SK-N-SH (cell line): ENCODE measurements at regions of chr1 and their contacts with region 1.

Region 1: DNA sequence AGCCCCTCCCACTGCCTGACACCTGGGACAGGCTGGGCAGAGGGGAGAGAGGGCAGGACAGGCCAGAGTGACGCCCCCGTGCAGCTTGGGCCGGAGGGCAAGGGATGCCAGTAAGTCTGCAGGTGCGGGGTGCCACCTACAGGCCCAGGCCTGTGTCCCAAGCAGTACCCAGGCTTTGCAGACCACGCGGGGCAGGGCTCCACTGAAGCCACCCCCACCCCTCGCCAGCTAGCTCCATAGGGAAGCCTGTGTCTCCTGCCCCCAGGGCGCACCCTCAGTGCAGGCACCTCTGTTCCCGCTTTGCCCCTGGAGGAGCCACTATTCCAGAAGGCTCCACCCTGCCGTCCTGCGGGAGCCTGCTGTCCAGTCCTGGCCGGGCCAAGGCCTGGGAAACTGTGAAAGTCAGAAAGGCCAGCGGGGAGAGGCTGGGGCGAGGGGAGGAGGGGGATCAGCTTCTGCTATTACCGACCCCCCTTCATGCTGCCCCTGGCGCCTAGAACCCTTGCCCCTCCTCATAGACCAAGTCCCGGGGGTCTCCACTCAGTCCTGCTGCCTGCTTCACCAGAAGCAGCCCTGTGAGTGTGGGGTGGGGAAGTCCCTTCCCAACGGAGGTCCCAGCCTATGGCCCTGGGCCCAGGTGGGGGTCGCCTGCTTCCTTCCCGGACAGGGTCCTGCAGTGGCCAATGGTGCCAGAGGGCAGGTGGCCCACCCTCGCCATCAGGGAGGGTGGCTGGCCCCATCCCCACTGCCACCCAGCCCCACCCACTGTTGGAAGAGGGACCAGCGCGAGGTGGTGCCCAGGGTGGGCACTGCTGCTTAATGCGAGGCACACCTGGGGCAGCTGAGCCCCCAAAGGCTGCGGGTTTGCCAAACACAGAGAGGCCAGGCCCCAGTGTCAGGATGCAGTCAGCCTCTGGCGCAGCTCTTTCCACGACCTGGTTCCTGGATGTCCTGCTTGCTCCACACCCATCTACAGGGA is 54.4 kb downstream of the KCNAB2 start:
- DNase-seq: peak; percentile 78
- H3K4me3 ChIP-seq: no peak overlapping the region
- H3K27ac ChIP-seq: no peak overlapping the region
- H3K4me1 ChIP-seq: peaks cover 0 to 5% of the 10 kb centered on the region in 2 experiments; a peak in 1 of 4 replicates
- H3K27me3 ChIP-seq: no peaks in the 10 kb centered on the region
- CTCF ChIP-seq: no peak
- EP300 ChIP-seq: no peak
- RAD21 ChIP-seq: peak; percentile 59

Region 2: GRCh38 chr1:5992026-5992813 is 107.9 kb before region 1 on chr1 and contains the start of gene NPHP4:
- CTCF ChIA-PET with region 1: no interaction called
- POLR2A ChIA-PET with region 1: no interaction called
- DNase-seq: peak; percentile 99
- H3K4me3 ChIP-seq: peak within 1 kb of the TSS; percentile 75 to 88
- H3K27ac ChIP-seq: peak within 1 kb of the TSS; percentile 83 to 88
- H3K4me1 ChIP-seq: peaks cover 0 to 20% of the 10 kb centered on the region in 2 experiments; a peak in 1 of 4 replicates
- H3K27me3 ChIP-seq: no peaks in the 10 kb centered on the region
- CTCF ChIP-seq: peak; percentile 9; the same call in 1 of the 2 replicates
- EP300 ChIP-seq: peak; percentile 15 to 20; a peak in 1 of 4 replicates
- RAD21 ChIP-seq: no peak
- polyA plus RNA-seq, gene NPHP4: 4.6 and 7.0 TPM in 2 replicates

Region 3: DNA sequence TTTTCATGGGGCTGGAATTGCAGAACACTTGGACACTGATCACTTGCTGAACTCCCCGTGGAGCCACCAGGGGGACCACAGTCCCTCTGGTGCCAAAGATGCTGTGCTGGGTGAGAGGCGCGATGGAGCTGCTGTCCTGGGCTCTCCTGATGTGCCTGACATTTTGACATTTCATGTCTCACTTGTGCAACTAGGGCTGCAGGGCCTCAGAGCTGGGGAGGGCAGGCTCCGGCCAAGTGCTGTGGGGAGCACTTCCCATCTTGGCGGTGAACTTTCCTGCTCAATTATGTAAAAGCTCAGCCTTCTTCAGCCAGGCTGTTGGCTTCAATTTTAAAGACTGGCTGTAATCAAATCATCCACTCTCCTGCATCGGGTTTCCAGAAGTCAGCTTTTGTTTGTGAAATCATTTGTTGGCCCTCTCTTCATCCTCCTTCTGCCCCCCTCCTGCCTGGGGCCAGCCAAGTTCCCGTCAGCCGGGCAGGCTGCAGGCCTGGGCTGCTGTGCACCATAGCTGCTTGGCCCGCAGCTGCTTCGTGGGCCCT is 17.6 kb before region 1 on chr1:
- CTCF ChIA-PET with region 1: interaction called, 38 read pairs
- POLR2A ChIA-PET with region 1: no interaction called
- DNase-seq: peak; percentile 82
- H3K4me3 ChIP-seq: no peak overlapping the region
- H3K27ac ChIP-seq: no peak overlapping the region
- H3K4me1 ChIP-seq: peaks cover 0 to 18% of the 10 kb centered on the region in 2 experiments; a peak in 1 of 4 replicates
- H3K27me3 ChIP-seq: no peaks in the 10 kb centered on the region
- CTCF ChIP-seq: peak; percentile 34
- EP300 ChIP-seq: no peak
- RAD21 ChIP-seq: peak; percentile 62